GM10248 (cell line): ENCODE measurements at regions of chr10 and their contacts with region 1.

Region 1: GRCh38 chr10:102713814-102714620 is at the start of gene ARL3:
- DNase-seq: peak; percentile 98
- CTCF ChIP-seq: no peak

Region 2: GRCh38 chr10:102645741-102646609 is 68.0 kb before region 1 on chr10:
- CTCF ChIA-PET with region 1: interaction called, 16 read pairs
- POLR2A ChIA-PET with region 1: interaction called, 5 read pairs
- DNase-seq: peak; percentile 74
- CTCF ChIP-seq: no peak

Region 3: DNA sequence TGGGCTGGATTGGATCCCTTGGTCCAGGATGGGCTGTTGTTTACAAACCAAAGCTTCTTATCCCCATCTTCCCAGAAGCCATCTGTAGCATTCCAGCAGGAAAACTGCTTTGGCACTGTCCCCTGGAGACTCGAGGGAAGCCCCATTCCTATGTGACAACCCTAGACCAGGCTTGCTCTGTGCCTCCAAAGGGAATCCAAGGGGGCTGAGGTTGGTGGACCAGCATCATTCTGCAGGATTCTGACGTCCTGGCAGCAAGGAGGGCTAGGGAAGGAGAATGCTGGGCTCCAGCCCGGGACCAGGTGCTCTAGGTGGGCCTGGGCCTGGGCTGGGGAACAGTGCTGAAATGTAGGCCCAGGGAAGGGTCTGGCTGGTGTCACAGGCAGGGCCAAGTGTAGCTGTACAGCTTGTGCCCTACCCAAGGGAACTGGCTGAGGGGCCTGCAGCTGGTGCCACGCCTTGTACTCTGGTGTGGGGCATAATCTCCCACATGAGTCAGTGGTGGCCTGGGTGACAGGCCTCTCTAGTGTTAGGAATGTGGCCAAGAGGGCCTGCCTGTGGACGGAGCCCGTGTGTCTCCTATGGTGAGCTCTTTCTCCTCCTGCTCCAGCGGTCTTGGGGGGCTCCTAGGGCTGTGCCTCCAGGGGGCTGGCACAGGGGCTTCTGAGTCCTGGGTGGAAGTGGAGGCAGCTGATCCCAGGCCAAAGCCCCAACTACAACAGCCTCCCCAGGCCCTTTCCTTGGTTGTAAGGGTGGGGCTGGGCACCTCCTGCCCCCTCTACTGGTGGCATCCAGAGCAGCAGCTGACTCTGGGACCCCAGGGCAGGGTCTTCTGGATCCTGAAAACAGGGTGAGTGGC is 44.6 kb before region 1 on chr10:
- CTCF ChIA-PET with region 1: interaction called, 41 read pairs
- POLR2A ChIA-PET with region 1: no interaction called
- DNase-seq: no peak
- CTCF ChIP-seq: peak; percentile 32

Region 4: DNA sequence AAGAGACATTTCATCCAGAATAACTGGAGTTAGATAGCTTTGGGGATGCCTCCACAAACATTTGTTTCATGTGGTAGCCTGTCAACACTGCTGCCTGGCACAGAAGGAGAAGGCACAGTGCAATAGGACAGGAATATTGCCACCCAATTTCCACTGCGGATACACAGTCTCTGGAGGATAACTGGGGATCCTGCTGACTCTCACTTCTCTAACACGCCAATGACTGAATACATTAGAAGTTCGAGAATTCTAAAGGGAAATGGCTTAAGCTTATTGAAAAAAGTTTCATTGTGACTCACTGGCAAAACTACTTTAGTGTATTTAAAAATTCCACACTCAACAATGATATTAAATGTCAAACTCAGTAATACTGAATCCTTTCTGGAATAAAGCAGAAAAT is 12.7 kb before region 1 on chr10:
- CTCF ChIA-PET with region 1: interaction called, 13 read pairs
- POLR2A ChIA-PET with region 1: no interaction called
- DNase-seq: no peak
- CTCF ChIP-seq: no peak

Region 5: DNA sequence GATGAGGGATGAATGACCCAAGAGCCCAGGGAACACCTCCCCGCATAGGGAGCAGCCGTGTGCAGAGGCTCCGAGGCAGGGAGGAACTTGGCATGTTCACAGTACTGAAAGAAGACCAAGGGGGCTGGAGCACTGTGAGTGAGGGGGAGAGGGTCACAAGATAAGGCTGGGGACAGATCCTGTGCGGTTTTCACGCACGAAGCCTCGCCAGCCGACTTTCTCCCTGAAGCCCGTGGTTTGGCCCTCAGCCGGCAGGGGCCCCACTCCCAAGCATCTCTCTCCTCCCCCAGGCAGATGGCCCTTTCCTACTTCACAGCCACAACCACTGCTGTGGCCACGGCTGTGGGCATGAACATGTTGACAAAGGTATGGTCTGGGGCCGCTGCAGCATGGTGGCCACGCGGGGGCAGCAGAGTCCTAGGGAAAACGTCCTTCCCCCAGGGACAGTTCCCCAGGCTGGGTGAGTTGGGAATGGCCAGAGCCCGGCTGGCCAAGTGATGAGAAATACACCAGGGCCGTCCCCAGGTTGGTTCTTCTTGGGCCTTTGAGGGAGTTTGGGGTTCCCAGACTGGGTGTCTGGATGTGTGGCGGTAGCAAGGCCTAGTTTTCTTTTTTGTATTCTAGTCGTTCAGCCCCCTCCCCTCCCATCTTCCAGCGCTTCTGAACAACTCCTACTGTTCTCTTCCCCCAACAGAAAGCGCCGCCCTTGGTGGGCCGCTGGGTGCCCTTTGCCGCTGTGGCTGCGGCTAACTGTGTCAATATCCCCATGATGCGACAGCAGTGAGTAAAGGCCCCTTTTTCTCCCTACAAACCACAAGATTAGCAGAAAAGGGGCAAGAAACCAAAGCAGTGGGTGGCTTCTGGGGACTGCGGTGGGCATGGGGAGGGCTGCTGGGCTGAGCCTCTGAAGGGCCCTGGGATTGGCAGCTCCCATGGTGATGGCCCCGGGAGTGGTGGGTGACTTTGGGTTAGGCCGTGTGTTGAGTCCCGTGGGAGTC is 15.3 kb after region 1 on chr10:
- CTCF ChIA-PET with region 1: interaction called, 11 read pairs
- POLR2A ChIA-PET with region 1: no interaction called
- DNase-seq: peak; percentile 77
- CTCF ChIP-seq: peak; percentile 94

Region 6: GRCh38 chr10:102815790-102816549 is 102.0 kb after region 1 on chr10:
- CTCF ChIA-PET with region 1: no interaction called
- POLR2A ChIA-PET with region 1: no interaction called
- DNase-seq: no peak
- CTCF ChIP-seq: no peak

Region 7: GRCh38 chr10:102975483-102976379 is 261.7 kb after region 1 on chr10:
- CTCF ChIA-PET with region 1: no interaction called
- POLR2A ChIA-PET with region 1: no interaction called
- DNase-seq: no peak
- CTCF ChIP-seq: no peak